ENCODE measurements at regions of chr5 and their contacts with region 1.

Region 1: GRCh38 chr5:157563373-157563928 is 12.1 kb downstream of the ADAM19 start:
- DNase-seq: peak; percentile 84

Region 2: DNA sequence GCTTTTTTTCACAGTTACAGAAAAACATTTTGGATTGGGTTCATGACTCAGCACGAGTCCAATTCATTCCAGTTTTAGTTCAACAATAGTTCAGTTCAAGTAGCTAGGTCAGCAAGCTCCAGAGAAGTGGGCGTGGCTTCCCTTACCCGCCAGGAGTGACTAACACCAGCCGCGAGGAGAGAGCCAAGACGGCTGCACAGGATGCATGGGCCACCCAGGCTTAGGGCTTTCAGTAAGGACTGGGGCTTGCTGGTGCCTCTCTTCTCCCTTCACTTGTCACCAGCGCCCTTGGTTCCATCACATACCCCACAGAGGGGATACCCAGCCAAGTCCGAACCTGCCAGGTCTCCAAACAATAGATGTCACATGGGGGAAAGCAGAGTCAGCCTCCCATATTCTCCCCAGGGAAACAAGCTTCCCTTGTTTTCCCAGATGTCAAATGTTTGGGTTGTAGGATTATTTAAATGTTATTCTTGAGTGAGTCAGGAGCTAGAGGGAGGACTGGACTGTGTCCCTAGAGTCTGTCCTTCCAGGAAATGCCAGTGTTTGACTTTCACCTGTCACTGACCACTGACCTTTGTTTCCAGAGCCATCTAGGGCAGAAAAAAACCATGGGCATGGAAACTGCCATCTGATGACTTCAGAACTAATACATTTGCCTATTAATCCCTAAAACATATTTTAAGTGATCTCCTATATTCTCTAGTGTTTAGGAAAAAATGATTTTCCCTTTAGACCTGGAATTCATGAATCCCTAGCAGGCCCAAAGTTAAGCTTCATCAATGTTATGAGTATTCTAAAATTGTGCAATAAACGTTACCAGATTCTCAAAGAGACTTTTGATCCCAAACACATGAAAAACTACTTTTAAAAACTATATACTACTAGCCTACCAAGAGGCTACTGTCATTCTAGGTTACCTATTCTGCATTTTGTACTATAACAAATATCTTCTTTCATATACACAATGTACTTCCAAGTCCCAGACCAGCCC is 51.5 kb before region 1 on chr5:
- intact Hi-C with region 1: loop called in 1 of 2 experiments (anchors 10 kb)
- DNase-seq: peak; percentile 98

Region 3: DNA sequence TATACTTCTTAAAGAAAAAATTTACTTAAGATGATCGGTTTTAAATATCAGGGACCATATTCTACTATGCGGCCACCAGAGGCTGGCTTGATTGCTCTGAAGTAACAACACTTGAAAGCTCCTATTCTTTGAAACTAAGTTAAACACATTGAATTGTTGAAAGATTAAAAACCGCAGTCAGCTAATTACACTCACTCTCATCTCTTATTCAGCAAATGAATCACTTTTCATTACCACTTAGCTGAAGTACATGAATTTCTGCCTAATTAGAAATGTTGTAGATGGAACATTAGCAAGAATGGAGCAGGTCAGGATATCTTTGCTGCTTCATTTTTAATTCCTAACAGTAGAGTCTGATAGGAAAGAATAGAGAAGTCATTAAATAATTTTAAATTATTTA is 222.3 kb after region 1 on chr5:
- intact Hi-C with region 1: no loop called
- DNase-seq: no peak

Measured in posterior vena cava (tissue), 2 donors.